ENCODE measurements at regions of chr19 and their contacts with region 1.

Region 1: DNA sequence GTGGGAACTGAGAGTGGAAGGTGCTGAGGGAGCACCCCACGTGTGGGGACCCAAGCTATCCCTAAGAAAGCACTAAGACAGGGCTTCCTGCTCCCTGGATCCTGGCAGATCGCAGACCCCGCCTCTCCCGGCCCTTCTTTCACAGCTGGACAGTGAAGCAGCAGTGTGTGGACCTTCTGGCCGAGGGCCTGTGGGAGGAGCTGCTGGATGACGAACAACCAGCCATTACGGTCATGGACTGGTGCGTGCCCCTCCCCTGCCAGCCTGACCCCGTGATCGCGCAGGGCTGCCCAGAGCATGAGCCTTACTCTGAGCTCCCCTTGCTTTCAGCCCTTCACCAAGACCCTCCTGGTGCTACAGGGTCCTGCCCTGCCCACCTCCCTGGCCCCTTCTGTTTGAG is 2.3 kb downstream of the NCCRP1 start:
- DNase-seq: no peak
- H3K4me3 ChIP-seq: no peak overlapping the region
- H3K4me3 Mint-ChIP-seq: no peak overlapping the region
- H3K27ac Mint-ChIP-seq: no peak overlapping the region
- H3K4me1 ChIP-seq: peaks cover 38% of the 10 kb centered on the region
- H3K4me1 Mint-ChIP-seq: peaks cover 10% of the 10 kb centered on the region
- H3K27me3 ChIP-seq: no peaks in the 10 kb centered on the region
- H3K27me3 Mint-ChIP-seq: no peaks in the 10 kb centered on the region
- CTCF ChIP-seq: no peak

Region 2: GRCh38 chr19:39175564-39175963 is 23.5 kb before region 1 on chr19:
- CTCF ChIA-PET with region 1: interaction called, 11 read pairs
- POLR2A ChIA-PET with region 1: no interaction called
- intact Hi-C with region 1: no loop called
- DNase-seq: no peak
- H3K4me3 ChIP-seq: no peak overlapping the region
- H3K4me3 Mint-ChIP-seq: no peak overlapping the region
- H3K27ac Mint-ChIP-seq: no peak overlapping the region
- H3K4me1 ChIP-seq: no peaks in the 10 kb centered on the region
- H3K4me1 Mint-ChIP-seq: no peaks in the 10 kb centered on the region
- H3K27me3 ChIP-seq: no peaks in the 10 kb centered on the region
- H3K27me3 Mint-ChIP-seq: no peaks in the 10 kb centered on the region
- CTCF ChIP-seq: no peak

Measured in Caco-2 (cell line).